ENCODE measurements at regions of chr4 and their contacts with region 1.

Region 1: GRCh38 chr4:110049951-110050925 is 137.6 kb downstream of the EGF start:
- DNase-seq: peak; percentile 54
- H3K4me3 ChIP-seq: no peak overlapping the region
- H3K27ac ChIP-seq: no peak overlapping the region
- H3K4me1 ChIP-seq: no peaks in the 10 kb centered on the region
- H3K27me3 ChIP-seq: no peaks in the 10 kb centered on the region
- CTCF ChIP-seq: peak in 2 of 3 experiments; percentile 57 to 59
- POLR2A ChIP-seq: no peak

Region 2: DNA sequence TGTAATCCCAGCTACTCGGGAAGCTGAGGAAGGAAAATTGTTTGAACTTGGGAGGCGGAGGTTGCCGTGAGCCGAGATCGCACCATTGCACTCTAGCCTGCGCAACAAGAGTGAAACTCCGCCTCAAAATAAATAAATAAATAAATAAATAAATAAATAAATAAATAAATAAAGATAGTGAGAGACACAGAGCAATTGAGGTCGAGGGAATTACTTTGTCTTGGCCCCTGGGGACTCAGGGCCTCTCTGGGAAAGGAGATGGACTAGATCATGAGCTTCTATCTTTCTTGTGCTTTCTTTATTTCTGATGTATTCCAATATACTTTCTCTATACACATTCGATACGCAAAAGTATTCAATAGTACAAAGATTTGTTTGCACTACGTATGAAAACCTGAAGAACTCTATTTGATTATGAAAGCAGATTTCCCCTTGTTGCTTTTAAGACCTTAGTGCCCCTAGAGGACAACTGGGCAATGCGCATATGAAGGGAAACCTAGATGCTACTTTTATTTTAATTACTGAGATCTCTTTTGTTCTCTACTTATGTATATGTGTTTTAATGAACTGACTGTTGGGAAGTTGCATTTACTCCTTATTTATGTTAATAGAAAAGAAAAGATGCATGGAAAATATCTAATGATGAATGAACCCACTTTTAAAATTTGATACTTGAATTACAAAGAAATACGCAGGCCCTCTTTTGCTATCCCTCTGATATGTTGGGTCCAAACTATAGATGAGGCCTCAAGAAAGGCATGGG is 160.9 kb after region 1 on chr4:
- intact Hi-C with region 1: loop called (anchors 10 kb)
- DNase-seq: peak; percentile 22
- H3K4me3 ChIP-seq: no peak overlapping the region
- H3K27ac ChIP-seq: no peak overlapping the region
- H3K4me1 ChIP-seq: no peaks in the 10 kb centered on the region
- H3K27me3 ChIP-seq: no peaks in the 10 kb centered on the region
- CTCF ChIP-seq: peak; percentile 49 to 71 (median 54)
- POLR2A ChIP-seq: no peak